MCF 10A (cell line): ENCODE measurements at regions of chr10 and their contacts with region 1.

Region 1: DNA sequence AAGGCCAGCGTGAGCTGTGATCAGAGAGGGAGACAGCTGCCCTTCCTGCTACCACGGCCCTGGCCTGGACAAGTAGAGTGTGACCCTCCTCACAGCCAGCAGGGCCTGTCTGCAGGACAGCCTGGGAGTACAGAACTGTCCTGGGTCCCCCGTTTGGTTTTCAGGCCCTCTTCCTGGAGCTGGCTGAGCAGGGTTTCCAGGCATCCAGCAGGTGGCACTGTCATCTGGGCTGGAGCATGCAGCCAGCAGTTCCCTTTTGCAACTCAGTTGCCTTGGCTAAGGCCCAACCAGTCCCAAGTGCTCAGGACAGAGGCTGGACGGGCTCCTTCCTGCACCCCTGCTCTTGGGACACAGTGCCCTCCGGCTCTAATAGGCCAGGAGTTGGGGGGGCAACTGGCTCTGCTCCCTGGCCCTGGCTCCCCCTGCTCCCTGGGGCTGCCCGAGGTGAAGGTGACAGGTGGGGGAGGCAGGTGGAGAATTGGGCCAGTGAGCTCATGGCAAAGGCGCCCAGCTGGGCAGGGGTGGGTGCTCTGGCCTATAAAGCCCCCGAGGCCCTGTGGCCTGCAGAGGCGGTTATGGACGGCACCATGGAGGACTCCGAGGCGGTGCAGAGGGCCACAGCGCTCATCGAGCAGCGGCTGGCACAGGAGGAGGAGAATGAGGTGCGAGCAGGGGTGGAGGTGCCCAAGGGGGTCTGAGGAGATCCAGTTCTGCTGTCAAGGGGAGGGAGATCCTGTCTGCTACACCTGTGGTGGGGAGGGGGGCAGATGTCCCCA is at the start of gene ANKRD2:
- DNase-seq: peak; percentile 89
- H3K4me3 Mint-ChIP-seq: peak within 1 kb of the TSS; percentile 50
- H3K27ac Mint-ChIP-seq: peak within 1 kb of the TSS; percentile 57
- H3K4me1 Mint-ChIP-seq: peaks cover 40% of the 10 kb centered on the region
- H3K27me3 Mint-ChIP-seq: no peaks in the 10 kb centered on the region
- CTCF ChIP-seq: peak; percentile 91
- total RNA-seq, gene ANKRD2: 1.8 and 5.8 TPM in 2 replicates

Region 2: GRCh38 chr10:97450828-97451227 is 121.6 kb before region 1 on chr10:
- CTCF ChIA-PET with region 1: no interaction called
- POLR2A ChIA-PET with region 1: no interaction called
- intact Hi-C with region 1: no loop called
- DNase-seq: no peak
- H3K4me3 Mint-ChIP-seq: no peak overlapping the region
- H3K27ac Mint-ChIP-seq: no peak overlapping the region
- H3K4me1 Mint-ChIP-seq: peaks cover 13% of the 10 kb centered on the region
- H3K27me3 Mint-ChIP-seq: no peaks in the 10 kb centered on the region
- CTCF ChIP-seq: no peak

Region 3: GRCh38 chr10:97463363-97464132 is 108.9 kb before region 1 on chr10:
- CTCF ChIA-PET with region 1: interaction called, 17 read pairs
- POLR2A ChIA-PET with region 1: interaction called, 5 read pairs
- intact Hi-C with region 1: loop called (anchors 5 kb)
- DNase-seq: peak; percentile 74
- H3K4me3 Mint-ChIP-seq: no peak overlapping the region
- H3K27ac Mint-ChIP-seq: peak overlapping the region; percentile 46
- H3K4me1 Mint-ChIP-seq: peaks cover 16% of the 10 kb centered on the region
- H3K27me3 Mint-ChIP-seq: no peaks in the 10 kb centered on the region
- CTCF ChIP-seq: peak; percentile 79

Region 4: GRCh38 chr10:97534746-97535367 is 37.5 kb before region 1 on chr10:
- CTCF ChIA-PET with region 1: interaction called, 12 read pairs
- POLR2A ChIA-PET with region 1: interaction called, 3 read pairs
- intact Hi-C with region 1: no loop called
- DNase-seq: peak; percentile 71
- H3K4me3 Mint-ChIP-seq: no peak overlapping the region
- H3K27ac Mint-ChIP-seq: no peak overlapping the region
- H3K4me1 Mint-ChIP-seq: peaks cover 10% of the 10 kb centered on the region
- H3K27me3 Mint-ChIP-seq: no peaks in the 10 kb centered on the region
- CTCF ChIP-seq: peak; percentile 56

Region 5: DNA sequence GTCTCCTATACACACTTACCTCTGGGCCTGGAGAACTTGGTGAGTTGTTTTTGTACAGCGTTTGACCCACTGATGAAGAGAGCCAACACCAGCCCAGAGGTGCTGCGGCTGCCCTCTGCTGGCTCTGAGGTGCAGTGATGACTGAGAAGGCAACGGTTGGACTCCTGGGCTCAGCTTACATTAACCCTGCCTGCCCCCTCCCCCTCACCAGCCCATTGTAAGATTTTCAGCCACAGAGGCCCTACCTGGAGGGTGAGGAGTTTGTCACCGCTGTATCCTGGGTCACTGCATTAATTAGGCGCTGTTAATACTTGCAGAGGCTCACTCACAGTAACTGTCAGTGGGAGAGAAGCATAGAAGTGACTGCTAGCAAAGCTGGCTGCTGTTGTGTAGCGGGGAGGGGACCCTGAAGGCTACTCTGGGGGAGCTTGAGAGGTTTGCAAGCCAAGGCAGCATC is 18.8 kb before region 1 on chr10:
- CTCF ChIA-PET with region 1: interaction called, 52 read pairs
- POLR2A ChIA-PET with region 1: interaction called, 16 read pairs
- intact Hi-C with region 1: no loop called
- DNase-seq: peak; percentile 78
- H3K4me3 Mint-ChIP-seq: no peak overlapping the region
- H3K27ac Mint-ChIP-seq: peak overlapping the region; percentile 46
- H3K4me1 Mint-ChIP-seq: peaks cover 28% of the 10 kb centered on the region
- H3K27me3 Mint-ChIP-seq: no peaks in the 10 kb centered on the region
- CTCF ChIP-seq: peak; percentile 88

Region 6: DNA sequence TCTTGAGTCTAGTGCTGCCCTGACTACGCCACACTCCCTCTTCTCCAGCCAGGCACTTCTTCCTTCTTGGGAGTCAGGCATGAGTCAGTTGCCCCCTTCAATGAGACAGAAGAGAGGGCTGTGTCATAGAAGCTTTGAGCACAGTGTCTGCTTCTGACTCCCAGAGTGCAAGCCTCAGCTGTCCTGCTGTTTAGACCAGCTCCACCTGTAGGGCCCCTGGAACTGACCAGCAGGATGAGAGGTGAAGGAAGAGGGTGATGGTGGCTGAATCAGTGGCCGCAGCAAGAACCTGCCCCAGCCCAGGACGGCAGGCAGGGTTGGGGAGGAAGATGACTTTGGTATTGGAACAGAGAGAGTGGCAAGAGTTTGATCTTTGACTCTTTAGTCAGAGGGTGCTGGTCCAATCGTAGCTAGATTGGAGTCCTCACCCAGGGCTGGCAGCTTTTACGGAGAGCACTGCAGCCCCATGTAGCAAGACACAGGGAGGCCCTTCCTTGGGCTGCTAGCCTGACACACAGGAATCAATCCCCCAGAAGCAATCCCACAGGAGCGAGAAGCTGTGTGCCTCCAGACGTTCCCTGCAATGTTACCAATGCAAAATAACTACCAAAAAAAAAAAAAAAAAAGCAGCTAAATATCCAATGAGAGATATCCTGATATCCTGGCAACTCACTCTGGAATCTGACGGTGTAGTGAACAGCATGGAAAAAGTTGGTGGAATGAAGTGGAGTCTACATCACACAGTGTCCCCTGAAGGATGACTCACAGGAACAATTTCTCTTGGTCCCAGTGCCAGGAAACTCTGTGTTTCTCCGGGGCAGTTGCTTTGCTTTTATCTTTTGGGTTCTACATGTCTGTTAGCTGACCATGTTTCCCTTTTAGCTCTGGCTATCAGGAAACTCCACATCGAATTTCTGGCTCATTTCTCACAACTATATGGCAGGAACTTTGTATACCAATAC is 24.0 kb after region 1 on chr10:
- CTCF ChIA-PET with region 1: interaction called, 20 read pairs
- POLR2A ChIA-PET with region 1: interaction called, 45 read pairs
- intact Hi-C with region 1: no loop called
- DNase-seq: peak; percentile 80
- H3K4me3 Mint-ChIP-seq: peak overlapping the region; percentile 13
- H3K27ac Mint-ChIP-seq: peak overlapping the region; percentile 70
- H3K4me1 Mint-ChIP-seq: peaks cover 29% of the 10 kb centered on the region
- H3K27me3 Mint-ChIP-seq: no peaks in the 10 kb centered on the region
- CTCF ChIP-seq: no peak

Region 7: GRCh38 chr10:97731346-97732051 is 159.1 kb after region 1 on chr10:
- CTCF ChIA-PET with region 1: no interaction called
- POLR2A ChIA-PET with region 1: interaction called, 3 read pairs
- intact Hi-C with region 1: loop called (anchors 5 kb)
- DNase-seq: peak; percentile 92
- H3K4me3 Mint-ChIP-seq: no peak overlapping the region
- H3K27ac Mint-ChIP-seq: no peak overlapping the region
- H3K4me1 Mint-ChIP-seq: peaks cover 15% of the 10 kb centered on the region
- H3K27me3 Mint-ChIP-seq: no peaks in the 10 kb centered on the region
- CTCF ChIP-seq: peak; percentile 86

Region 8: GRCh38 chr10:98030991-98031431 is 458.6 kb after region 1 on chr10:
- CTCF ChIA-PET with region 1: no interaction called
- POLR2A ChIA-PET with region 1: no interaction called
- intact Hi-C with region 1: no loop called
- DNase-seq: no peak
- H3K4me3 Mint-ChIP-seq: no peak overlapping the region
- H3K27ac Mint-ChIP-seq: no peak overlapping the region
- H3K4me1 Mint-ChIP-seq: no peaks in the 10 kb centered on the region
- H3K27me3 Mint-ChIP-seq: peaks cover 56% of the 10 kb centered on the region
- CTCF ChIP-seq: no peak